ENCODE measurements at regions of chr6 and their contacts with region 1.

Region 1: DNA sequence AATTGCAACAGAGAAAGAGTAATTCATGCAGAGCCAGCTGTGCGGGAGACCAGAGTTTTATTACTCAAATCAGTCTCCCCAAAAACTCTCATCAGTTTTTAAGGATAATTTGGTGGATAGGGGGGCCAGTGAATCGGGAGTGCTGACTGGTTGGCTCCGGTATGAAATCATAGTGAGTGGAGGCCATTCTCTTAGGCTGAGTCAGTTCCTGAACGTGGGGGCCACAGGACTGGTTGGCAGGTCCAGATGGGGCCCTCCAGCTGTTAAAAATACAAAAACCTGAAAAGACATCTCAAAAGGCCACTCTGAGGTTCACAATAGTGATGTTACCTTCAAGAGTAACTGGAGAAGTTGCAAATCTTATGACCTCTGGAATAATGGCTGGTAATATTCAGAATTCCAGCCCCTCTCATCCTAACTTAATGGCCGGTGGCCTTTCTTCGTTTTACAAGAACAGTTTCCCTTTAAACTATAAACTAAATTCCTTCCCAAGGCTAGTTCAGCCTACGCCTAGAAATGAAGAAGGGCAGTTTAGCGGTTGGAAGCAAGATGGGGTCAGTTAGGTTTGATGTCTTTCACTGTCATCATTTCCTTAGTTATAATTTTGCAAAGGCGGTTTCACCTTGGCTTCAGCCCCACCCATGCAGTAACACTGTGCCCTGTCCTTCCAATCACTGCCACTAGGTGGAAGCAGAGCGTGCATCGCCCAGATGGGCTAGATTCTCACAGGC is 6.8 kb upstream of the MICA start:
- DNase-seq: peak; percentile 88
- ATAC-seq: peak; percentile 63
- H3K4me3 ChIP-seq: no peak overlapping the region
- H3K4me3 Mint-ChIP-seq: peak overlapping the region; percentile 66
- H3K27ac ChIP-seq: no peak overlapping the region
- H3K27ac Mint-ChIP-seq: peak overlapping the region; percentile 48
- H3K4me1 ChIP-seq: peaks cover 8 to 26% of the 10 kb centered on the region in 2 donors
- H3K4me1 Mint-ChIP-seq: peaks cover 26% of the 10 kb centered on the region
- H3K27me3 ChIP-seq: no peaks in the 10 kb centered on the region
- H3K27me3 Mint-ChIP-seq: no peaks in the 10 kb centered on the region
- CTCF ChIP-seq: peak; percentile 85

Region 2: DNA sequence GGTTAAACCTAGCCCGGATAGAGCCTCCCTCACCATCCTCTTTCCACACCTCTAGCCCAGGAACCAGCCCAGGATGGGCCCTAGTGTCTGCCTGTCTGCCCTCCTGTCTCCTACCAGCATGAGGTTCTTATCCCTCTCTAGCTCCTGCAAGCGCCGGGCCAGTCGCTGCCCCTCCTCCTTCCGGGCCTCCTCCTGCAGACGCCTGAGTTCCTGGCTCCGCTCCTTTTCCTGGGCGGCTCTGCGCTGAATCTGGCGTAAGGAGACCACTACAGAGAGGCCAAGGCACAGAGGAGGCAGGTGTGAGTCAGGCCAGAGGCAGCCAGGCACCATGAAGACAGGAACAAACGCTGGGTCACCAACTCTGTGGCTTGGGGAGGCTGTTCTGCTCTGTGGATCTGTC is 253.4 kb before region 1 on chr6:
- CTCF ChIA-PET with region 1: interaction called, 4 read pairs
- POLR2A ChIA-PET with region 1: interaction called, 12 read pairs
- intact Hi-C with region 1: no loop called
- DNase-seq: no peak
- ATAC-seq: no peak
- H3K4me3 ChIP-seq: no peak overlapping the region
- H3K4me3 Mint-ChIP-seq: no peak overlapping the region
- H3K27ac ChIP-seq: no peak overlapping the region
- H3K27ac Mint-ChIP-seq: no peak overlapping the region
- H3K4me1 ChIP-seq: no peaks in the 10 kb centered on the region
- H3K4me1 Mint-ChIP-seq: peaks cover 2% of the 10 kb centered on the region
- H3K27me3 ChIP-seq: no peaks in the 10 kb centered on the region
- H3K27me3 Mint-ChIP-seq: no peaks in the 10 kb centered on the region
- CTCF ChIP-seq: no peak

Region 3: GRCh38 chr6:31441365-31442267 is 45.0 kb after region 1 on chr6:
- CTCF ChIA-PET with region 1: interaction called, 78 read pairs
- POLR2A ChIA-PET with region 1: interaction called, 6 read pairs
- intact Hi-C with region 1: loop called (anchors 1 kb)
- DNase-seq: peak; percentile 81
- ATAC-seq: peak; percentile 95
- H3K4me3 ChIP-seq: no peak overlapping the region
- H3K4me3 Mint-ChIP-seq: no peak overlapping the region
- H3K27ac ChIP-seq: no peak overlapping the region
- H3K27ac Mint-ChIP-seq: peak overlapping the region; percentile 20
- H3K4me1 ChIP-seq: peaks cover 3 to 4% of the 10 kb centered on the region in 2 donors
- H3K4me1 Mint-ChIP-seq: peaks cover 17% of the 10 kb centered on the region
- H3K27me3 ChIP-seq: peaks cover 0 to 18% (median 16%) of the 10 kb centered on the region in 4 experiments
- H3K27me3 Mint-ChIP-seq: peaks cover 47% of the 10 kb centered on the region
- CTCF ChIP-seq: peak; percentile 87

Region 4: GRCh38 chr6:31493875-31494694 is 97.5 kb after region 1 on chr6:
- CTCF ChIA-PET with region 1: interaction called, 5 read pairs
- POLR2A ChIA-PET with region 1: interaction called, 8 read pairs
- intact Hi-C with region 1: loop called (anchors 2 kb)
- DNase-seq: peak; percentile 89
- ATAC-seq: peak; percentile 47
- H3K4me3 ChIP-seq: peak overlapping the region; percentile 76 to 91 (median 85)
- H3K4me3 Mint-ChIP-seq: peak overlapping the region; percentile 83
- H3K27ac ChIP-seq: peak overlapping the region; percentile 74 to 80
- H3K27ac Mint-ChIP-seq: peak overlapping the region; percentile 89
- H3K4me1 ChIP-seq: peaks cover 42 to 54% of the 10 kb centered on the region in 2 donors
- H3K4me1 Mint-ChIP-seq: peaks cover 46% of the 10 kb centered on the region
- H3K27me3 ChIP-seq: no peaks in the 10 kb centered on the region
- H3K27me3 Mint-ChIP-seq: no peaks in the 10 kb centered on the region
- CTCF ChIP-seq: peak; percentile 88

Region 5: GRCh38 chr6:31531162-31531561 is 134.6 kb after region 1 on chr6:
- CTCF ChIA-PET with region 1: no interaction called
- POLR2A ChIA-PET with region 1: interaction called, 11 read pairs
- intact Hi-C with region 1: no loop called
- DNase-seq: no peak
- ATAC-seq: no peak
- H3K4me3 ChIP-seq: no peak overlapping the region
- H3K4me3 Mint-ChIP-seq: no peak overlapping the region
- H3K27ac ChIP-seq: no peak overlapping the region
- H3K27ac Mint-ChIP-seq: no peak overlapping the region
- H3K4me1 ChIP-seq: no peaks in the 10 kb centered on the region
- H3K4me1 Mint-ChIP-seq: peaks cover 14% of the 10 kb centered on the region
- H3K27me3 ChIP-seq: no peaks in the 10 kb centered on the region
- H3K27me3 Mint-ChIP-seq: no peaks in the 10 kb centered on the region
- CTCF ChIP-seq: no peak

Region 6: GRCh38 chr6:31541658-31542521 is 145.3 kb after region 1 on chr6 and contains the start of gene DDX39B:
- CTCF ChIA-PET with region 1: no interaction called
- POLR2A ChIA-PET with region 1: interaction called, 4 read pairs
- intact Hi-C with region 1: loop called (anchors 1 kb)
- DNase-seq: peak; percentile 97
- ATAC-seq: peak; percentile 72
- H3K4me3 ChIP-seq: peak within 1 kb of the TSS; percentile 79 to 100 (median 97)
- H3K4me3 Mint-ChIP-seq: peak within 1 kb of the TSS; percentile 99
- H3K27ac ChIP-seq: peak within 1 kb of the TSS; percentile 97 to 99
- H3K27ac Mint-ChIP-seq: peak within 1 kb of the TSS; percentile 93
- H3K4me1 ChIP-seq: peaks cover 37 to 43% of the 10 kb centered on the region in 2 donors
- H3K4me1 Mint-ChIP-seq: peaks cover 50% of the 10 kb centered on the region
- H3K27me3 ChIP-seq: no peaks in the 10 kb centered on the region
- H3K27me3 Mint-ChIP-seq: no peaks in the 10 kb centered on the region
- CTCF ChIP-seq: no peak
- total RNA-seq, gene DDX39B: 576 and 577 TPM in 2 replicates

Measured in B cell (primary cell).